A549 (cell line): ENCODE measurements at regions of chr17 and their contacts with region 1.

Region 1: GRCh38 chr17:30336369-30337171 is 2.7 kb upstream of the TMIGD1 start:
- DNase-seq: peak; percentile 66 to 88
- ATAC-seq: peak; percentile 78 to 82
- H3K4me3 ChIP-seq: no peak overlapping the region
- H3K27ac ChIP-seq: peak overlapping the region; percentile 3 to 36; a peak in 3 of 6 replicates
- H3K4me1 ChIP-seq: peaks cover 38% of the 10 kb centered on the region
- CTCF ChIP-seq: peak; percentile 99
- EP300 ChIP-seq: no peak
- POLR2A ChIP-seq: no peak
- RAD21 ChIP-seq: peak; percentile 87 to 94

Region 2: GRCh38 chr17:29954405-29954804 is 382.2 kb before region 1 on chr17:
- CTCF ChIA-PET with region 1: no interaction called
- POLR2A ChIA-PET with region 1: no interaction called
- DNase-seq: no peak
- ATAC-seq: no peak
- H3K4me3 ChIP-seq: no peak overlapping the region
- H3K27ac ChIP-seq: no peak overlapping the region
- H3K4me1 ChIP-seq: peaks cover 10% of the 10 kb centered on the region
- CTCF ChIP-seq: no peak
- EP300 ChIP-seq: no peak
- POLR2A ChIP-seq: no peak
- RAD21 ChIP-seq: 0 out of 5 replicates have a peak, but pooled peaks of 1 of the 2 experiments have one; percentile 11

Region 3: GRCh38 chr17:30124273-30124796 is 212.2 kb before region 1 on chr17:
- CTCF ChIA-PET with region 1: interaction called, 61 read pairs
- POLR2A ChIA-PET with region 1: no interaction called
- DNase-seq: no peak
- ATAC-seq: peak in 1 of 2 experiments; percentile 55; a peak in 3 of 6 replicates
- H3K4me3 ChIP-seq: no peak overlapping the region
- H3K27ac ChIP-seq: no peak overlapping the region
- H3K4me1 ChIP-seq: peaks cover 13% of the 10 kb centered on the region; the same call in 2 of the 3 replicates
- CTCF ChIP-seq: no peak
- EP300 ChIP-seq: no peak
- POLR2A ChIP-seq: no peak
- RAD21 ChIP-seq: no peak

Region 4: GRCh38 chr17:30148376-30148775 is 188.2 kb before region 1 on chr17:
- CTCF ChIA-PET with region 1: interaction called, 11 read pairs
- POLR2A ChIA-PET with region 1: no interaction called
- DNase-seq: no peak
- ATAC-seq: no peak; a peak in 1 of 6 replicates
- H3K4me3 ChIP-seq: no peak overlapping the region
- H3K27ac ChIP-seq: no peak overlapping the region
- H3K4me1 ChIP-seq: peaks cover 7% of the 10 kb centered on the region
- CTCF ChIP-seq: no peak
- EP300 ChIP-seq: no peak
- POLR2A ChIP-seq: no peak
- RAD21 ChIP-seq: no peak

Region 5: DNA sequence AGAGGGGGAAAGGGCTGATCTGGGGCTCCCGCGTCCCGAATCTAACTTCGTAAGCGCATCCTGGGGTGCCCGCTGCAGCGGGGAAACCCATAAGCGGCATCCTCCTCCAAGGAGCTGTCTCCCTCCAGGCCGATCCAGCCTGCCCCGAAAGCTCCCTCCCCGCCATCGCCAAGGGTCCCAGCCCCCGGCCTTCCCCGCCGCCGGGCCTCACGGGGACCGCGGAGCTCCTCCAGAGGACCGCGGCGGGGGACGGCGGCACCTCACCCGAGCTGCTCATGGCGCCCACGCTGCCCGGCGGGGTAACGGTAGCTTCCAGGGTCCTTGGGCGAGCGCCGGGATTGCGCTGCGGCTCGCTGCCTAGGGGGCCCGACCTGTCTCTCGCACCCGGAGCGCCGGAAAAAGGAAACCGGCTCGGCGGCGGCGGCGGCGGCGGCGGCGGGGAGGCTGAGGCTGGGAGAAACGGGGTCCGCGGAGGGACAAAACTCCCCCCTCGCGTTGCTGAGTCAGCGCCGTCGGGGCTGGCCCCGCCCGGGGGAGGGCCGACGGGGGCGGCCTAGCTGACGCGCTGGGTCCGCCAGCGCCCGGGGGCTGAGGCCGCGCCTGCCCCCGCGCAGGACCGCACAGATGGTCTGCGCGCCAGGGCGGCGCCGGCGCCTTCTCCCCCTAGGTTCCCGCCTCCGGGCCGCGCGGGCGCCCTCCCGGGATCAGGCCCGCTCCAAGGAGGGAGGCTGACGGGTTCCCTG is 44.9 kb before region 1 on chr17 and contains the start of gene BLMH:
- CTCF ChIA-PET with region 1: interaction called, 46 read pairs
- POLR2A ChIA-PET with region 1: interaction called, 4 read pairs
- DNase-seq: peak; percentile 79 to 80
- ATAC-seq: peak; percentile 86 to 93
- H3K4me3 ChIP-seq: peak within 1 kb of the TSS; percentile 80
- H3K27ac ChIP-seq: peak within 1 kb of the TSS; percentile 82 to 92
- H3K4me1 ChIP-seq: peaks cover 10% of the 10 kb centered on the region
- CTCF ChIP-seq: no peak
- EP300 ChIP-seq: no peak
- POLR2A ChIP-seq: peak; percentile 86
- RAD21 ChIP-seq: peak in 1 of 2 experiments; percentile 14; a peak in 1 of 5 replicates
- polyA plus RNA-seq, gene BLMH: 36.4 and 38.5 TPM in 2 replicates

Region 6: DNA sequence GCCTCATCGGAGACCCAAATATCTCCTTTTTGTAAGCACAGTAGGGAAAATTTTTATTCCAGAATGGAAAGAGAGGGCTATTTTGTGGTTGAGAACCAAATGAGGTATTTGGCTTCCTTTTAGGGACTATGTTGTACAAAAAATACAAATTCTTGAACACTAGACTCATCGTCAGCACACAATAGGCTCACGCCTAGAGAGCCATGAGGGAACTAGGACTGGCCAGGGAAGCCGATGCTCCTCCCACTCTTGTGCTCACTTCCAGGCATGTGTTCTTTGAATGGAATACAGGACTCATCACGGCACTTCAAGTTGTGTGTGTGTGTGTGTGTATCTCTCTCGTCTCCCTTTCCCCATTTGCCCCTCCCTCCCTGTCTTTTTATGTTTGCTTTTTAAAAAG is 27.0 kb before region 1 on chr17:
- CTCF ChIA-PET with region 1: interaction called, 30 read pairs
- POLR2A ChIA-PET with region 1: no interaction called
- DNase-seq: no peak
- ATAC-seq: no peak
- H3K4me3 ChIP-seq: no peak overlapping the region
- H3K27ac ChIP-seq: no peak overlapping the region
- H3K4me1 ChIP-seq: peaks cover 6% of the 10 kb centered on the region; the same call in 2 of the 3 replicates
- CTCF ChIP-seq: no peak
- EP300 ChIP-seq: no peak
- POLR2A ChIP-seq: no peak
- RAD21 ChIP-seq: no peak

Region 7: DNA sequence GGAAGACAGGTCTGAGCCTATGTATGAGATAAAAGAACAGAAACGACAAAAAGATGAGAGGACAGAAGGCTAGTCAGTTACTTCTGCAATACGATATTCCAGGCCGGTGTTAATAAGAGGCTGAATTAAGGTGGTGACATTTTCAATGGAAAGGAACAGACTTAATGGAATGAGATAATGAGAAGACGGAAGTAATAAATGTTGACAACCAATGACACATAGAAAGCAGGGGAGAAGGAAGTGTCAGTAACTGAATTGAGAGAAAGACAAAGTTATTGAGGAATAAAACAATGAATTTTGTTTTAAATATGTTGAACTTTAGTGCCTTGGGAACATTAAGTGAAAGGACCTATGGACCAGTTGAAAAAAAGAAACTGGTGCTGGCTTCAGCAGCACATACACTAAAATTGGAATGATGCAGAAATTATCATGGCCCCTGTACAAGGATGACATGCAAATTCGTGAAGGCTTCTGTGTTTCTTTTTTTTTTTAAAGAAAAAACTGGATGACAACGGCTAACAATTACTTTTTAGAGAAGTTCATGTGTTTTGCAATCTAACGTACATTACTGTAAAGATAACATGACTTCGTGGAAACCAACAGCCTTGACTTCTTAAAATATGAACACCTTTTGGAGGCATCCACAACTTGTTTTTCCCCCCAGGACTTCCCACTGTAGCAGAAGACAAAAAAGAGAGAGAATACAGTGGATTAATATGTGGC is 23.7 kb after region 1 on chr17:
- CTCF ChIA-PET with region 1: interaction called, 23 read pairs
- POLR2A ChIA-PET with region 1: no interaction called
- DNase-seq: no peak
- ATAC-seq: no peak
- H3K4me3 ChIP-seq: no peak overlapping the region
- H3K27ac ChIP-seq: no peak overlapping the region
- H3K4me1 ChIP-seq: peaks cover 8% of the 10 kb centered on the region; the same call in 2 of the 3 replicates
- CTCF ChIP-seq: no peak
- EP300 ChIP-seq: no peak
- POLR2A ChIP-seq: no peak
- RAD21 ChIP-seq: no peak

Region 8: DNA sequence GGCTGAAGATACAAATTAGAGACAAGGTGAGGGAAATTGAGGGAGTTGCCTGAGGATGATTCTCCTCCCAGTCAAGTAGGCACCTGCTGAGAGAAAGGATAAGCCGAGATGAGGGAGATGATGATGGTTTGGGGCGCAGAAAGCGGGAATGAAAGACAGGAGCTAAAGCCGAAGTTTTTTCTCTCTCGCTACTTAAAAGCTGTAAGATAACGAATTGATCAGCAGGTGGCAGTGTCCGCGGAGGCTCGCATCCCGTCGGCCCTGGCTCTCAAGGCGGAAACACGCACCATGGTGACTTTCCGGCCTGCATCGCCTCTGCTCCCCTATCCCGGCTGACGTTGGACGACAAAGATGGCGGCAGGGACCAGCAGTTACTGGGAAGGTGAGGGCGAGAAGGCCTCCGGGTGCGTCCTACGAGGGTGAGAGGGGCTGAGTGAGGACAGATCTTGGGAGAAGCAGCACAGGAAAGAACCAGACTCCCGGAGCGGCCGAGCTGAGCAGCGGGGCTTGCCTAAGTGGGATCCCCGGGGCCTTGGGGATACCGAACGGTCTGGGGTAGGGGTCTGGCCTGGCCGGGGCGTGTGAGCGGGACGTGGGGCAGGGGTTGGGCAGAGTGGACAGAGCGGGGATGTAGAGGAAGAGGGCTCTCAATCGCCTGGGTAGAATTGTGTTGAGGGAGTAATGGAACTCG is 140.7 kb after region 1 on chr17 and contains the start of gene GOSR1:
- CTCF ChIA-PET with region 1: interaction called, 30 read pairs
- POLR2A ChIA-PET with region 1: no interaction called
- DNase-seq: peak; percentile 96 to 98
- ATAC-seq: peak; percentile 100
- H3K4me3 ChIP-seq: peak within 1 kb of the TSS; percentile 77
- H3K27ac ChIP-seq: peak within 1 kb of the TSS; percentile 95
- H3K4me1 ChIP-seq: peaks cover 14% of the 10 kb centered on the region; the same call in 2 of the 3 replicates
- CTCF ChIP-seq: peak; percentile 84
- EP300 ChIP-seq: no peak
- POLR2A ChIP-seq: peak; percentile 94
- RAD21 ChIP-seq: peak; percentile 55 to 57
- polyA plus RNA-seq, gene GOSR1: 46.1 and 49.6 TPM in 2 replicates